ENCODE measurements at regions of chr7 and their contacts with region 1.

Region 1: DNA sequence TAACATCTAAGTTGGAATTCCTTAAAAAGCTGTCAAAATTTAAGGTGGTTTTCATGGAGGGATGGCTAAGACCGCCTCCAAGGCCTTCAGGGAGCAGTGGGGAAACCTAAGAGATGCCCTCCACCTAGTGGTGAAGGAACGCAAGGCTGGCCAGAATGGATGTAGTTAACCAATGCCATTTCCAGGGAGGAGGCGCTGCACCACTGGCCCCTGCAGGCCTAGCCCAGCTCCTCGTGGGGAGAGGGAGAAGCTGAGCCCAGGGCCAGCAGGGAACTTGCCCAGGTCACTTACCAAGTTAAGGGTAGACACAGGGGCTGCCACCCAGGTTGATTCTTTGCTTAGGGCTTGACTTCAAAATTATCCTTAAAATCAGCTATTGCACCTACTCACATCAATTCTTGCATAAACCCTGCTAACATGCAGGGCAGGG is 32.0 kb downstream of the FIGNL1 start:
- DNase-seq: peak; percentile 72
- CTCF ChIP-seq: peak; percentile 90

Region 2: DNA sequence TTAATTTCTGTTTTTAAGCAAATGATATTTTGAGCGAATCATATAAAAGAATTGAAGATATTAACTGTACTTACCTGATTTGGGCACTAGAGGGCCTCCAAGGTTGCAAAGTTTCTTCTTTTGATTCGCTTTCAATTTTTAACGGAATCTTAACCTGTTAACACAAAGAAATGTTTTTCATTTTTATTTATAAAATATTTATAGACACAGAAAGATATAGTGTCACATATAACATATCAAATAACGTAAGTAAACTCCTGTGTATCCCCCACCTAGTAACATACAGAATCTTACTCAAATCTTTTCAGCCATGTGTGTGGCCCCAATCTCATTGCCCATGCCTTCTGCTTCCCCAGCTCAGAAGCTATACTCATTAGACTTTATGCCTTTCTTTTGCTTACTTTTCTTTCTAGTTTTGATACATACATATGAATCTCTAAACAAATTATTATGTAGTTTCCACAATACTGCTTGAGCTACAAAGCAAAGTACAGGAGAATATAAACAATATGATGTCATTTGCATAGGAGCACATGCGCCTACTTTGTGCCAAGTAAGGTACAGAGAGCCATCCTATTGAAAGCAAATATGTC is 275.6 kb before region 1 on chr7:
- in situ Hi-C with region 1: loop called (anchors 10 kb)
- DNase-seq: peak; percentile 24
- CTCF ChIP-seq: peak; percentile 57

Region 3: GRCh38 chr7:50728184-50728583 is 310.1 kb after region 1 on chr7:
- in situ Hi-C with region 1: no loop called
- DNase-seq: no peak
- CTCF ChIP-seq: no peak

Measured in GM13976 (cell line).